Mammary epithelial cell (primary cell): ENCODE measurements at regions of chr5 and their contacts with region 1.

Region 1: GRCh38 chr5:177454397-177455035 is 7.9 kb downstream of the PRR7 start:
- DNase-seq: peak; percentile 85
- H3K4me3 ChIP-seq: peak overlapping the region; percentile 28 to 60 (median 57)
- H3K27ac ChIP-seq: peak overlapping the region; percentile 23
- H3K4me1 ChIP-seq: peaks cover 46% of the 10 kb centered on the region
- H3K27me3 ChIP-seq: no peaks in the 10 kb centered on the region
- CTCF ChIP-seq: peak; percentile 70 to 83

Region 2: GRCh38 chr5:176474510-176474909 is 980.0 kb before region 1 on chr5:
- CTCF ChIA-PET with region 1: no interaction called
- dilution Hi-C with region 1: no loop called
- in situ Hi-C with region 1: no loop called
- intact Hi-C with region 1: no loop called
- DNase-seq: peak; percentile 16
- H3K4me3 ChIP-seq: no peak overlapping the region
- H3K27ac ChIP-seq: no peak overlapping the region
- H3K4me1 ChIP-seq: no peaks in the 10 kb centered on the region
- H3K27me3 ChIP-seq: no peaks in the 10 kb centered on the region
- CTCF ChIP-seq: no peak

Region 3: DNA sequence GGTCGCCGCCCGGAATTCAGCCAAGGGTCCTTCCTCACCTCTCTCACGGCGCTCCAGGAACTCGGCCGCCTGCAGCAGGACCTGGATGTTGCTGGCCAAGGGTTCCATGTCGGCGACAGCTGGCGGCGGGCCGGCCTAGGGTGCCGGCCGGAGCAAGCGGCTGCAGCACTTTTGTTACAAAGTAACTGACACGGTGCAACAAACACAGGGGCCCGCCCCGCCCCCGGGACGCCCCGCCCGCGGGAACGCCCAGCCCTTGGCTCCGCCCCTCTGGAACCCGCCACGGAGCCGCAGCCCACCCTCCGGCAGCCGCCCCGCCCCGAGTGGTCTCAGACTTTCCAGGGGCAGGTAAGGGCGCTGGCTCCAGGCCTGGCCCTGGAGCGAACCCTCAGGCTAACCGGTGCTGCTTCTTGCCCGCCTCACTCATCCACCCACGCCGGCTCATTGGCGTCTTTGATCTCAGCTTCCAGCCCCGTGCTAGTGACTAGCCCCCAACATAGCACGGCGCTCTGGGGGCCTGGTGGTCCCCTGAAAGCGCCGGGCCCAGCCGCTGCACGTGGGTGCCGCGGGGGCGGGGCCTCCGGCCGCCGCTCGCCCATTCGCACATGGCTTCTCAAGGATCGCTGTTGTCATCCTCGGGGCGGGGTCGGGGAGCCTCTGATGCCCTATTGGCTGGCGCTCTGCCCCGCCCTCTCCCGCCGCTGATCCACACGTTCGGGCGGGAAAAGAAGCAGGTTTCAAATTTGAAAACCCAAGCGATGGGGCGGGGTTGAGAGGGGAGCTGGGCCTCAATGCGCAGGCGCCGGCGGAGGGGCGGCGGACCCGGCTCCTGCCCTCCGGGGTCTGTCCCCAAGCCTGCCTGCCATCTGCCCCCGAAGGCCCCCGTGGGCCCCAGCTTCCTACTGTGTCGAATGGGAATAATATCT is 142.5 kb before region 1 on chr5 and contains the start of gene MXD3:
- CTCF ChIA-PET with region 1: no interaction called
- dilution Hi-C with region 1: no loop called
- in situ Hi-C with region 1: no loop called
- intact Hi-C with region 1: loop called (anchors 2 kb)
- DNase-seq: peak; percentile 90
- H3K4me3 ChIP-seq: peak within 1 kb of the TSS; percentile 51 to 75 (median 63)
- H3K27ac ChIP-seq: peak within 1 kb of the TSS; percentile 62
- H3K4me1 ChIP-seq: peaks cover 27% of the 10 kb centered on the region
- H3K27me3 ChIP-seq: no peaks in the 10 kb centered on the region
- CTCF ChIP-seq: no peak
- total RNA-seq, gene MXD3: 0.83 to 10.7 TPM

Region 4: DNA sequence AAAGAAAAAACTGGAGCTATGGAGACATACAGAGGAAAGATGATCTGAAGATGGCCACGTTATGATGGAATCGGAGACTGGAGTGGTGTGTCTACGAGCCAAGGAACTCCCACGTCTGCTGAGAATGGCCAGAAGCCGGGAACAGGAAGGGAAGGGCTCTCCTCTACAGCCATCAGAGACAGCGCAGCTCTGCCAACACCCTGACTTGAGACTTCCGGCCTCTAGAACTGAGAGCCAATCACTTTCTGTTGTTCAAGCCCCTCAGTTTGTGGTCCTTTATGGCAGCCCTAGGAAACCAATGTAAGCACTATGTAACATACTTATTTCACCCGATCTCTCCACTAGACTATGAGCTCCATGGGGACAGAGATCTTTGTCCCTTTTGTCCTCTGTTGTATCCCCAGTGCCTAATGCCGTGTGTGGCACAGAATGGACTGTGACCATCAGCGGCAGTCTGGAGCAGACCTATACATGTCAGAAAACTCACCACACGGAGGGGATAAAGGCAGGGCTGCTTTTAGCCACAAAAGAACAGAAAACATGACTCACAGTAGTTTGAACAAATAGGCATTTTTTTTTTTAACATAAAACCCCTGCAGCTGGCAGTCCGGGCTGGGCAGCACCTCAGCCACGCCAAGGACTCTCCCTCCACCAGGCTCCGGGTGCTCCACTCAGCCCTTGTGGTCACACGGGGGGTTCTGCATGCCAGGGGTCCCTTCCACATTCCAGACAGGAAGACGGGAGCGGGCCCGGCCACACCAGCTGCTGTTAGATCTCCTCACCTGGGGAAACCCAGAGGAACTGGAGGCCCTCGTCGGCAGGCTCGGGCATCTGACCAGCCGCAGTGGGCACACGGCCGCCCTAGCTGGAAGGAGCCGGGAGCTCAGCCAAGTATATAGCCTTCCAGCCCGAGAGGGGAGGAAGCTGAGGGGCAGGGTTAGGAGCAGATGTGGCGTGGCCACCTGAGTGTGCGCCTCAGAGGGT is 126.7 kb before region 1 on chr5:
- CTCF ChIA-PET with region 1: no interaction called
- dilution Hi-C with region 1: loop called (anchors 5 kb)
- in situ Hi-C with region 1: loop called in 1 of 2 experiments (anchors 10 kb)
- intact Hi-C with region 1: no loop called
- DNase-seq: peak; percentile 72
- H3K4me3 ChIP-seq: peak overlapping the region in 1 of 3 experiments; percentile 2
- H3K27ac ChIP-seq: peak overlapping the region; percentile 63
- H3K4me1 ChIP-seq: peaks cover 34% of the 10 kb centered on the region
- H3K27me3 ChIP-seq: no peaks in the 10 kb centered on the region
- CTCF ChIP-seq: peak in 1 of 2 donors; percentile 3

Region 5: GRCh38 chr5:177390363-177391300 is 63.9 kb before region 1 on chr5:
- CTCF ChIA-PET with region 1: interaction called, 4 read pairs
- dilution Hi-C with region 1: no loop called
- in situ Hi-C with region 1: loop called in 1 of 2 experiments (anchors 5 kb)
- intact Hi-C with region 1: loop called (anchors 1 kb)
- DNase-seq: peak; percentile 73
- H3K4me3 ChIP-seq: no peak overlapping the region
- H3K27ac ChIP-seq: peak overlapping the region; percentile 68
- H3K4me1 ChIP-seq: peaks cover 29% of the 10 kb centered on the region
- H3K27me3 ChIP-seq: no peaks in the 10 kb centered on the region
- CTCF ChIP-seq: peak; percentile 89 to 94

Region 6: DNA sequence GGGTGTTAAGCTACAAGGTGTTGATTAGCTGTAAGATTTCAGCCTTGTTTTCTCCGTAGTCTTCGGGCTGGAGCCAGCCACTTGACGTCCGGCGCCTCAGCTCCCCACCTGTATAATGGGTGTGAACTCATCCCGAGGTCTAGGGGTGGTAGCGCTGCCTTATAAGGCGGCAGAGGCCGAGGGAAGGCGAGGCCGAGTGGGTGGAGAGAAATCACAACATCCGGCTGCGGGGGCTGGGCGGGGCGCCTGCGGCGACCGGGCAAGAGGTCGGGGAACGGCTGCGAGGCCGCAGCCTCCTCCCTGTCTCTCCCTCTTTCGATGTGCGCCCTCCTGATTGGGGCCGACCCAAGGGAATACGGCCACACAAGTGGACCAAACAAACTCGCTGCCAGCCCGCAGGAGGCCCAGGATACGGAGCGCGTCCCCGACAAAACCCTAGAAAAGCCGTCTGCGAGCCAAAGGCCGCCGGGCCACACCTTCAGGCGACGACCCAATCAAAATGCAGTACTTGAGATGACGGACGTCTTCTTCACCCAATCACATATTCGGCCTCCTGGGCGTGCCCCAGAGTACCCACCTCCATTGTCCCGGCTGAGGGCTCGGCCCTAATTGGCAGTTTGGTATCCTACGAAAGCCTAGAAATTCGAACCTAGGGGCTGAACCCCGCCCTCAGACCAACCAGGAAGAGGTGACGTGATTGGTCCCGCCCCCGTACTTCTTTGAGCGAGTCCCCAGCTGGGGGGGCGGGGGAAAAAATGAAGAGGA is 28.5 kb before region 1 on chr5:
- CTCF ChIA-PET with region 1: interaction called, 4 read pairs
- dilution Hi-C with region 1: no loop called
- in situ Hi-C with region 1: no loop called
- intact Hi-C with region 1: loop called (anchors 2 kb)
- DNase-seq: peak; percentile 100
- H3K4me3 ChIP-seq: peak overlapping the region; percentile 51 to 68 (median 54)
- H3K27ac ChIP-seq: peak overlapping the region; percentile 71
- H3K4me1 ChIP-seq: peaks cover 31% of the 10 kb centered on the region
- H3K27me3 ChIP-seq: no peaks in the 10 kb centered on the region
- CTCF ChIP-seq: no peak

Region 7: GRCh38 chr5:177497292-177498033 is 42.9 kb after region 1 on chr5 and contains the start of gene PDLIM7:
- CTCF ChIA-PET with region 1: no interaction called
- dilution Hi-C with region 1: no loop called
- in situ Hi-C with region 1: no loop called
- intact Hi-C with region 1: loop called (anchors 1 kb)
- DNase-seq: peak; percentile 95
- H3K4me3 ChIP-seq: peak within 1 kb of the TSS; percentile 73 to 80 (median 74)
- H3K27ac ChIP-seq: peak within 1 kb of the TSS; percentile 37
- H3K4me1 ChIP-seq: peaks cover 61% of the 10 kb centered on the region
- H3K27me3 ChIP-seq: no peaks in the 10 kb centered on the region
- CTCF ChIP-seq: peak in 1 of 2 donors; percentile 14
- total RNA-seq, gene PDLIM7: 235 to 259 TPM